Activated T-helper 2 cell treated with anti-CD3 and anti-CD28 coated beads, Interferon-gamma antibody, Interleukin-2, Interleukin-4, amounts not matched to agents 10 μg/mL and 5 μg/mL and 100 μg/mL, durations not matched to agents 14 hours and 24 hours and 36 hours (primary cell): ENCODE measurements at regions of chr2 and their contacts with region 1.

Region 1: GRCh38 chr2:26178746-26179436 is 6.0 kb downstream of the GAREM2 start:
- DNase-seq: no peak
- H3K4me3 Mint-ChIP-seq: peak overlapping the region; percentile 56
- H3K27ac Mint-ChIP-seq: no peak overlapping the region
- H3K4me1 Mint-ChIP-seq: peaks cover 10% of the 10 kb centered on the region
- H3K27me3 Mint-ChIP-seq: peaks cover 41% of the 10 kb centered on the region

Region 2: GRCh38 chr2:25740810-25741381 is 438.0 kb before region 1 on chr2:
- intact Hi-C with region 1: no loop called
- DNase-seq: no peak
- H3K4me3 Mint-ChIP-seq: no peak overlapping the region
- H3K27ac Mint-ChIP-seq: no peak overlapping the region
- H3K4me1 Mint-ChIP-seq: peaks cover 17% of the 10 kb centered on the region
- H3K27me3 Mint-ChIP-seq: no peaks in the 10 kb centered on the region

Region 3: DNA sequence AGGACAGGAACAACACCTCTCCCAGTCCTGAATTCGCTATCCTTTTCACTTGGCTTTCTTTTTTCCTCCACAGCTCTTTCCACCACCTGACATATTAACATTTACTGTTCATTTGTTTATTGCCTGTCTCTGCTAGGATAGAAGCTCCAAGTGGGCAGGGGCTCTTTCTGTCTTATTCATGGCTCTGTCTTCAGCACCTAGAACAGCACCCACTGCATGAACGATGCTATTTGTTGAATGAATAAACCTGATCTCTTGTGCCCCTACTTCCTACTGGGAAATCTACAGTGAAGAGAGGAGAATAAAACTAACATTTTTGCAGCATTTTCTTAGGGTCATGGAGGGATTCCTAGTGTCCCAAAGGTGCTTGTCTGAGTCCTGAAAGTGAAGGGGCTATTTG is 30.4 kb before region 1 on chr2:
- intact Hi-C with region 1: no loop called
- DNase-seq: no peak
- H3K4me3 Mint-ChIP-seq: no peak overlapping the region
- H3K27ac Mint-ChIP-seq: no peak overlapping the region
- H3K4me1 Mint-ChIP-seq: peaks cover 3% of the 10 kb centered on the region
- H3K27me3 Mint-ChIP-seq: peaks cover 27% of the 10 kb centered on the region

Region 4: DNA sequence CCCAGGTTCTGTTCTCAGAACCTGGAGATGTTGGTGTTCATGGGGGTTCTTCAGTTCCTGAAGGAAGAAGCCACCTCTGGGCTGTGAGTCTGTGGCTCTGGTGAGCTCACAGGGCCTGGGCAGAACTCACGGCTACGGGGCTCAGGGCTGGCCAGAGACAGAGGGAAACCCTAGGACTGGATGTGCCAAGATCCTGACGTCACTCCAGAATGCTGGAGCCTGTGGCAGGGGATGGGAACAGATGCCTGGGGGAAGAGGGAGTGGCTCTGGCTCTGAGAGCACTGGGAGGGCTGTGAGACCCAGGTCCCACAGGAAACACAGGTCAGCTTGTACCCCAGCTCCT is 299.0 kb after region 1 on chr2 and contains the start of gene OTOF:
- intact Hi-C with region 1: loop called (anchors 10 kb)
- DNase-seq: no peak
- H3K4me3 Mint-ChIP-seq: peak within 1 kb of the TSS; percentile 69
- H3K27ac Mint-ChIP-seq: peak within 1 kb of the TSS; percentile 77
- H3K4me1 Mint-ChIP-seq: peaks cover 5% of the 10 kb centered on the region
- H3K27me3 Mint-ChIP-seq: no peaks in the 10 kb centered on the region
- total RNA-seq, gene OTOF: 9.8 and 12.3 TPM in 2 replicates